ENCODE measurements at regions of chr12 and their contacts with region 1.

Region 1: GRCh38 chr12:63420206-63420644 is 248.1 kb downstream of the DPY19L2 start:
- ATAC-seq: peak in 3 of 8 experiments; percentile 86 to 92 (median 89)
- H3K4me3 ChIP-seq: no peak overlapping the region
- H3K27ac ChIP-seq: no peak overlapping the region
- H3K4me1 ChIP-seq: no peaks in the 10 kb centered on the region

Region 2: DNA sequence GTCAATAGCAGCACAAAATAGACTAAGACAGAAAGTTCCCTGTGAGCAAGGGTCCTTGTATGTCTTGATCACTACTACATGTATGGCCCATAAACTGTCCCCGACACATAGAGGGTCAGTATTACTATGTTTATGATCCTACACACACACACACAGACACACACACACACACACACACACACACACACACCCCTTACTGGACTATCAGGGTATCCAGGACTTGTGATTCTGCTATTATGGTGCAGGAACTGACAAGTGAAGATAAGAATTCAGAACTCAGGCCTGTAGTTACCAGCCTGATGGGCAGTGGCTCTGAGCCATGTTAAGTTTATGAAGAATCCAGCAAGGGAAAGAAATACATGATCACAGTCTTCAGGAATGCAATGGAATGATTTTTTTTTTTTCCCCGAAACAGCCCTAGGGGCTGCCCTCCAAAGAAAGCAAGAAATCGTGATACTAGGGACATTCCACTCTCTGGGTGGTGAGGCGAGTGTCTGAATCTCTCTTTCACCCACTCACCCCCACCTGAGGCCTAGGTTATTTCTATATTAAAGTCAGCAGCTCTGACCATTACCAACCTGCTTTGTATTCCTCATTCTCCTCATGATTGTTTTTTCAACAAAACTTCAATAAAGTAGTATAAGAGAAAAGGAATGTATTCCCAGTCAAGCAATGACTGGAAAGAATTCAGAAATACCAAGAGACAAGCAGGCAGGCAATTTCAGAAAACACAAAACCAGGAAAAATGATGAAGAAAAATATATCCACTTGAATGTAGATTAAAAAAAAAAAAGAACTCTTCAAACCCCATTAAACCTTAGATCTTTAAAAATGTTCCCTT is 375.0 kb before region 1 on chr12:
- in situ Hi-C with region 1: no loop called
- ATAC-seq: peak in 3 of 8 experiments; percentile 23 to 62 (median 56)
- H3K4me3 ChIP-seq: no peak overlapping the region
- H3K27ac ChIP-seq: no peak overlapping the region
- H3K4me1 ChIP-seq: no peaks in the 10 kb centered on the region

Region 3: DNA sequence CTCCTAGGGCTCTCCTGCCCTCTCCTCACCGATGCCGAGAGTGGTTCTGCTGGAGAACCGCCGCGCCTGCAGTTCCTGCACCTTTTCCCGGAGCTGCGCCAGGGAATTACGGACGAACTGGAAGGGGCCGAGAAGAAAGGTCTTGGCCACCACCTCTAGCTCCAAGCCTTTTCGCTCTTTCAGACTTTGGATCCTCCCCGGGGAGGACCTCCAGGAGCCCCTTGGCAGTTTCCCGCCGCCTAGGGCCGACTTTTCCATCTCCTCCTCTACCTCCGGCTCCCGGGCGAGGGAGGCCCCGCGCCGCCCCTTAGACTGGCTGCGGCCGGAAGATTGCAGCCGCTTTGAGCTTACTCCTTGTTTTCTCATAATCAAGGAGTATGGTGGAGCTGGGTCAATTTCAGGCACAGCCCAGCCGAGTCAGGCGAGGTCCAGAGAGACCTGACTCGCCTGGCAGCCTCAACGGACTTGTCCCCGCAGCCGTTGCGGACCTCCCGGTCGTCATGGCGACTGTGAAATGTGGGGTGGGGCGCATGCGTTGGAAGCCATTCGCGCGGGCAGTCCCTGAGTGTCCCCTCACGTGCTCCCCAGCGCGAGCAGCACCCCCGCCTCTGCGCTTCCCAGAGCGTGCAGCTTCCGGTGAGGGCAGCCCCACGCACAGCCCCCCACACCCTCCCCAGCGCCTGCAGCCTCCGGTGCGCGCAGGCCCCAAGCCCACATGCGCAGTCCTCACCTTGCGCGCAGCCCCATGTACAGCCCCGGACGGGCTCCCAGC is 248.0 kb after region 1 on chr12 and contains the start of gene DPY19L2:
- in situ Hi-C with region 1: loop called in 1 of 9 experiments (anchors 25 kb)
- ATAC-seq: peak; percentile 78 to 97 (median 92)
- H3K4me3 ChIP-seq: peak within 1 kb of the TSS; percentile 53 to 94 (median 80)
- H3K27ac ChIP-seq: peak within 1 kb of the TSS; percentile 14 to 72
- H3K4me1 ChIP-seq: peaks cover 6 to 8% of the 10 kb centered on the region in 2 donors
- total RNA-seq, gene DPY19L2: 1.7 to 22.8 (median 14.7) TPM

Region 4: DNA sequence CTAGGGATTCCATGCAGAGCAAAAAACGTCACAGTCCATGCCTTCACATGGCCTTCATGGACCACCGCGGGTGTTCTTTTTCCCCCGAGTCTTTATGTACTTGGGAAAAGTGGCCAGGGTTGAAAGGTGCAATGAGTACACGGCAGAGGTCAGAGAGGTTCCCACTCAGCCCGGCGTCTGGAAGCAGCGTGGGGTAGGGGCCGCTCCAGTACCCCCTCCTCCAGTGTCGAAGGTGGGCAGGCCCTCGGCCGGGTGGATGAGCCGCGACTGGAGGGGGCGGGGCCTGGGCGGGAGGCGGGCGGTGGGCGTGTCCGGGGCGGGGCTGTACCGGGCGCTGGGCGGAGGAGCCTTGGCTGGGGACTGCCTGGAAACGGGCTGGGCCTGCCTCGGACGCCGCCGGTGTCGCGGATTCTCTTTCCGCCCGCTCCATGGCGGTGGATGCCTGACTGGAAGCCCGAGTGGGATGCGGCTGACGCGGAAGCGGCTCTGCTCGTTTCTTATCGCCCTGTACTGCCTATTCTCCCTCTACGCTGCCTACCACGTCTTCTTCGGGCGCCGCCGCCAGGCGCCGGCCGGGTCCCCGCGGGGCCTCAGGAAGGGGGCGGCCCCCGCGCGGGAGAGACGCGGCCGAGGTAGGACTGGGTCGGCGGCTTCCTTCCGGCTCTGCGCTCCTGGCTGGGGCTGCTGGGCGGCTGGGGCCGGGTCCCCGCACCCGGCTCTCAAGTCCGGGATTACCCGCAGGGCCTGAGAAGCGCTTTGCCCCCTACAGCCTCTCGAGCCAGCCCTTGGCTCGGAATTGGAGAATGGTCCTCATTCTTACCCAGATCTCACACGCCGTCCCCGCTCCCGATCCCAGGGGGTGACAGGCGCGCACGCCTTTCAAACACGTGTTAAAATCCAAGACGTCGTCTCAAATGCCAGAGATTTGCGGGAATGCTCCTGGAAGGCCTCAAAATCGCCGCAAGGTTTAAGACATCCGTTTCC is 359.6 kb after region 1 on chr12 and contains the start of gene RXYLT1:
- in situ Hi-C with region 1: loop called in 1 of 9 experiments (anchors 25 kb)
- ATAC-seq: peak; percentile 93 to 95 (median 94)
- H3K4me3 ChIP-seq: peak within 1 kb of the TSS; percentile 57 to 82 (median 68)
- H3K27ac ChIP-seq: peak within 1 kb of the TSS; percentile 84 to 95
- H3K4me1 ChIP-seq: peaks cover 0 to 6% of the 10 kb centered on the region in 2 donors
- total RNA-seq, gene RXYLT1: 11.0 to 32.4 (median 17.4) TPM

Region 5: GRCh38 chr12:63802012-63802608 is 381.9 kb after region 1 on chr12:
- in situ Hi-C with region 1: loop called in 3 of 9 experiments (anchors 25 kb)
- ATAC-seq: no peak
- H3K4me3 ChIP-seq: no peak overlapping the region
- H3K27ac ChIP-seq: no peak overlapping the region
- H3K4me1 ChIP-seq: no peaks in the 10 kb centered on the region

Measured in motor neuron (in vitro differentiated cells).